ENCODE measurements at regions of chr6 and their contacts with region 1.

Region 1: DNA sequence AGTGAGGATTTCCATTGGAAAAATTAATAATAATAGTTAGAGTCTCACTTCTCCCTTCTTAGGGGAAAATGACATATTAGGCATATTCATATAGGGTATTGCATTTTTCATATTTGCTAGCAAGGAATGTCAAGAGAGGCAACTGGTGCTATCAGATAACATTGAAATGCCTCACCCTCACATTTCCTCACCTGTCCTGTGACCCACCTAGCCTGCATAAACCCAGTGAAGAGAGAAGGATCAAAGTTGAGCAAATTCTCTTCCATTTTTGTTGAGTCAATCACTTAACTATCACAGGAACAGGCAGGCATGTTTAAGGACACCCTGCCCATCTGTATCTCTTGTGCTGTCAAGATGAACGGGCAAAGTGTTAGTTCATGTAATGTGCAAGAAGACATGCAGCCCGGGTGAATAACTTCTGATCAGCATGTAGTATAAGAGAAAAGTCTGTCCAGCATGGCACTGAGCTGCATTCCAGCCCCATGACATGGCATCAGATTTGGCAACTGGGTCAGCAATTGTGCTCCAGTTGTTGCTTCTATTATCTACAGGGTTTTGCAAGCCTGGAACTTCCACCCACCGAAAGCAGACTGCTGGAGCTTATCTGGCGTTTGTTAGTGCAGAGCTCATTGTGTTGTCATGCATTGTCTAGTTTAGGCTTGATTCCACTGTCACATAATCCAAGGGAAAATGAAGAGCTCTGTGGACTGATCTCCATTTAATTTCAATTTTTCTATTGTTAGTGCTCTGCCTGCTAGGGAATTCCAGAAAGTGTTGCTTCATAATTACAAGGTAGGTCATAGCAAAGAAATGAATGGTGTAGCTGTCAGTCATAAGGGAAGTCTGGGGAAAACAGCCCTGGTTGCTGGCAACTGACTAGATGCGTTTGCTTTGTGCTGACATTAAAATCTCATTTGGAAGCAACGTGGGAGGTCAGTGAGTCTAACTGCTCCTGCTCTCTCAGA is 138.4 kb upstream of the TNFAIP3 start:
- DNase-seq: peak; percentile 92
- ATAC-seq: peak; percentile 43
- H3K4me3 ChIP-seq: no peak overlapping the region
- H3K27ac ChIP-seq: peak overlapping the region; percentile 89
- H3K4me1 ChIP-seq: peaks cover 99% of the 10 kb centered on the region
- H3K27me3 ChIP-seq: no peaks in the 10 kb centered on the region
- CTCF ChIP-seq: no peak
- EP300 ChIP-seq: peak in 1 of 2 experiments; percentile 58; a peak in 1 of 4 replicates
- POLR2A ChIP-seq: no peak
- RAD21 ChIP-seq: no peak

Region 2: GRCh38 chr6:137357263-137357947 is 371.3 kb before region 1 on chr6:
- CTCF ChIA-PET with region 1: no interaction called
- POLR2A ChIA-PET with region 1: no interaction called
- in situ Hi-C with region 1: no loop called
- intact Hi-C with region 1: loop called (anchors 2 kb)
- DNase-seq: peak; percentile 100
- ATAC-seq: peak; percentile 86
- H3K4me3 ChIP-seq: peak overlapping the region in 2 of 3 experiments; percentile 24 to 54; a peak in 2 of 6 replicates
- H3K27ac ChIP-seq: peak overlapping the region; percentile 99
- H3K4me1 ChIP-seq: peaks cover 87% of the 10 kb centered on the region
- H3K27me3 ChIP-seq: no peaks in the 10 kb centered on the region
- CTCF ChIP-seq: 0 out of 2 replicates have a peak, but pooled peaks have one; percentile 20
- EP300 ChIP-seq: peak; percentile 95 to 97
- POLR2A ChIP-seq: peak; percentile 88 to 90
- RAD21 ChIP-seq: peak; percentile 71

Region 3: GRCh38 chr6:137641474-137642077 is 87.1 kb before region 1 on chr6:
- CTCF ChIA-PET with region 1: no interaction called
- POLR2A ChIA-PET with region 1: no interaction called
- in situ Hi-C with region 1: no loop called
- intact Hi-C with region 1: no loop called
- DNase-seq: peak; percentile 79
- ATAC-seq: peak; percentile 99
- H3K4me3 ChIP-seq: no peak overlapping the region
- H3K27ac ChIP-seq: no peak overlapping the region
- H3K4me1 ChIP-seq: peaks cover 14% of the 10 kb centered on the region; the same call in 1 of the 2 replicates
- H3K27me3 ChIP-seq: no peaks in the 10 kb centered on the region
- CTCF ChIP-seq: peak; percentile 93
- EP300 ChIP-seq: no peak
- POLR2A ChIP-seq: no peak
- RAD21 ChIP-seq: peak; percentile 90

Region 4: DNA sequence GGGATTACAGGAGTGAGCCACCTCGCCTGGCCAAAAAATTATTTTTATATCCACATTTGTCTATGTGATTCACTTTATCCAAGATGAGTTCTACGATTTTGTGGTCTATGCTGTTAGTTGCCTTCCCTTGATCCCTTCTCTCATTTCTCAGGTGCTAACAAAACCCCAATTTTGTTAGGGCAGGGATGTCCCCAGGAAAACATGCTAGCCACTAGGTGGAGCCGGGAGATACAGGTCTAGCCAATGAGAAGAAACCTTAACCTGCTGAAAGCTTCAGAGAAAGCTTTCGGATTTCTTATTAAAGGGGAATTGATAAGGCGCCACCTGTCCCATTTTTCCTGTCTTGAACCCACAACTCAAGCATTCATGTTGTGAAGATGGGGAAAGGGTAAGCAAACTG is 67.1 kb before region 1 on chr6:
- CTCF ChIA-PET with region 1: no interaction called
- POLR2A ChIA-PET with region 1: no interaction called
- in situ Hi-C with region 1: no loop called
- intact Hi-C with region 1: loop called (anchors 2 kb)
- DNase-seq: peak; percentile 48
- ATAC-seq: peak; percentile 83
- H3K4me3 ChIP-seq: no peak overlapping the region
- H3K27ac ChIP-seq: no peak overlapping the region
- H3K4me1 ChIP-seq: peaks cover 54% of the 10 kb centered on the region
- H3K27me3 ChIP-seq: peaks cover 0 to 2% of the 10 kb centered on the region in 2 experiments; a peak in 2 of 5 replicates
- CTCF ChIP-seq: peak; percentile 71
- EP300 ChIP-seq: no peak
- POLR2A ChIP-seq: no peak
- RAD21 ChIP-seq: no peak

Region 5: DNA sequence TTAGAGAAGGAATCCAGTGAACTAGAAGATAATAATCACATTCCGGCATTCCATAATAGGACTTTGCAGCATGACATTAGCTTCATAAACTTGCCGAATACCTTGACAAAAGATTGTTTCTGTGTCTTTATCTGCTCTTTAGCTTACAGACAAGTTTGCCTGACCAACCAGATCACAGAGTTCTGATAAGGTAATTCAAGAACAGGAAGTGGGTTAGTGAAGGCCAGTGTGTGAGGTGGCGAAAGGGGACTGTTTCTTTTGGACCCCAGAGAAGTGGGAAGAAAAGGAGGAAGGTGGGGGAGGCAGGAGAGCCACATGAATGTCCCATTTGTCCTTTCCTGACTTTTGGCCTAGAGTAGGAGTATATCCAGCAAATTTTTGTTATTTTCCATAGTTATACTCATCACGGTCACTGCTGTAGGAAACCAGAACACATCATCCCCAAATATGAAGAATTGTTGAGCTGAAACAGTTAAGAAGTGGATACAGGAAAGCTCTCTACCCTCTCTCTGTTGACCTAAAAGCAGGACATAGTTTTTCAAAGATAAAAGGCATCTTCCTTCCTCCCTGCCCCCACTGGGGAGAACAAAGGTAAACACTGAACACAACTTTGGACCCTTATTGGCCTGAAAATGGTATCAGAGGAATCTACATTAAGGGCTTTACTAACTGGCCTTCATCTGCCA is 66.0 kb after region 1 on chr6:
- CTCF ChIA-PET with region 1: no interaction called
- POLR2A ChIA-PET with region 1: interaction called, 30 read pairs
- in situ Hi-C with region 1: no loop called
- intact Hi-C with region 1: loop called (anchors 2 kb)
- DNase-seq: peak; percentile 99
- ATAC-seq: peak; percentile 88
- H3K4me3 ChIP-seq: peak overlapping the region; percentile 5 to 47 (median 5); a peak in 2 of 6 replicates
- H3K27ac ChIP-seq: peak overlapping the region; percentile 98
- H3K4me1 ChIP-seq: peaks cover 96% of the 10 kb centered on the region
- H3K27me3 ChIP-seq: no peaks in the 10 kb centered on the region
- CTCF ChIP-seq: peak; percentile 20; the same call in 1 of the 2 replicates
- EP300 ChIP-seq: peak; percentile 86 to 99; a peak in 3 of 4 replicates
- POLR2A ChIP-seq: no peak
- RAD21 ChIP-seq: peak; percentile 77

Region 6: GRCh38 chr6:137799950-137800568 is 71.4 kb after region 1 on chr6:
- CTCF ChIA-PET with region 1: no interaction called
- POLR2A ChIA-PET with region 1: interaction called, 30 read pairs
- in situ Hi-C with region 1: loop called (anchors 5 kb)
- intact Hi-C with region 1: loop called (anchors 2 kb)
- DNase-seq: peak; percentile 59
- ATAC-seq: peak; percentile 41; the same call in 2 of the 3 replicates
- H3K4me3 ChIP-seq: no peak overlapping the region
- H3K27ac ChIP-seq: no peak overlapping the region
- H3K4me1 ChIP-seq: peaks cover 100% of the 10 kb centered on the region
- H3K27me3 ChIP-seq: no peaks in the 10 kb centered on the region
- CTCF ChIP-seq: peak; percentile 58
- EP300 ChIP-seq: no peak
- POLR2A ChIP-seq: no peak
- RAD21 ChIP-seq: peak; percentile 52

Measured in HepG2 (cell line).